ENCODE measurements at regions of chr12 and their contacts with region 1.

Region 1: DNA sequence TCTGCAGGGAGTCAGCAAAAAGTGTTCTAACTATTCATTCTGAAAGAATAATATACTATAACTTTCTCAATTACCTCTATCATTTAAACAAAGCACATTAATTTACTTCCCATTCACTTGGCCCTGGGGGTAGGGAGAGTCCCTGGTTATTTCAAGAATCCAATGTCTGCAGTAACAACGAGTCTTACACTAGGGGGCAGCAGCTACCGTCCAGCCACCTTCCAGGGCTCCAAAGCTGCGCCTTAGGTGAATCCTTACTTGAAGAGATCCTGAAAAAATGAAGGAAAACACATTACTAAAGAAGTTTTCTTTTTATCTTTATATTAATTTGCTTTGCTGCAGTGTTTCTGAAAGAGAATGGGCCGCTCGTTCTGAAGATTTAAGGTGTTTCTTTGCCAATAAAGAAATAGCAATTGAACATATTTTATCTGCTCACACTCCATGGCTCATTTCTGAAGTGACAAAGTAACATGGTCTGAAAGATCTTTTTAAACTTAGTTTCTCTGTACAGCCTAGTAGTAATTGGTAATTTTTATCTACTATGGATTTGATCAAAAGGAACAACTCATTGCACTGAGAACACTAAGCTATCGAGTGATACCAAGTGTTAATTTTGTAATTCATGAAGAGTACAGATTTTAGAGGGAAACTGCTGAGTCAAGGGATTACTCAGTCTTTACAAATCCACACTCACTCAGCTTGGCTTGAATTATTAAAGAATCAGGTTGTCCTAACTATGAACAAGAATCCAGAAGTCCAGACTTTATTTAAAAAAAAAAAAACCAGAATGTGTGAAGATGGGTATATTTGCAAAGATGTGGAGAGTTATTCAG is 27.6 kb downstream of the BHLHE41 start:
- DNase-seq: peak; percentile 79
- H3K4me3 Mint-ChIP-seq: no peak overlapping the region
- H3K27ac Mint-ChIP-seq: no peak overlapping the region
- H3K4me1 Mint-ChIP-seq: peaks cover 14% of the 10 kb centered on the region
- H3K27me3 Mint-ChIP-seq: no peaks in the 10 kb centered on the region
- CTCF ChIP-seq: peak; percentile 84

Region 2: GRCh38 chr12:25005376-25005775 is 1091.9 kb before region 1 on chr12:
- CTCF ChIA-PET with region 1: no interaction called
- intact Hi-C with region 1: no loop called
- DNase-seq: no peak
- H3K4me3 Mint-ChIP-seq: no peak overlapping the region
- H3K27ac Mint-ChIP-seq: no peak overlapping the region
- H3K4me1 Mint-ChIP-seq: no peaks in the 10 kb centered on the region
- H3K27me3 Mint-ChIP-seq: no peaks in the 10 kb centered on the region
- CTCF ChIP-seq: no peak

Region 3: GRCh38 chr12:25757037-25757665 is 340.1 kb before region 1 on chr12:
- CTCF ChIA-PET with region 1: no interaction called
- intact Hi-C with region 1: no loop called
- DNase-seq: no peak
- H3K4me3 Mint-ChIP-seq: no peak overlapping the region
- H3K27ac Mint-ChIP-seq: no peak overlapping the region
- H3K4me1 Mint-ChIP-seq: peaks cover 11% of the 10 kb centered on the region
- H3K27me3 Mint-ChIP-seq: no peaks in the 10 kb centered on the region
- CTCF ChIP-seq: no peak

Region 4: GRCh38 chr12:26113853-26114719 is 16.8 kb after region 1 on chr12:
- CTCF ChIA-PET with region 1: interaction called, 5 read pairs
- intact Hi-C with region 1: loop called (anchors 2 kb)
- DNase-seq: peak; percentile 91
- H3K4me3 Mint-ChIP-seq: peak overlapping the region; percentile 71
- H3K27ac Mint-ChIP-seq: peak overlapping the region; percentile 79
- H3K4me1 Mint-ChIP-seq: peaks cover 29% of the 10 kb centered on the region
- H3K27me3 Mint-ChIP-seq: no peaks in the 10 kb centered on the region
- CTCF ChIP-seq: peak; percentile 23

Region 5: DNA sequence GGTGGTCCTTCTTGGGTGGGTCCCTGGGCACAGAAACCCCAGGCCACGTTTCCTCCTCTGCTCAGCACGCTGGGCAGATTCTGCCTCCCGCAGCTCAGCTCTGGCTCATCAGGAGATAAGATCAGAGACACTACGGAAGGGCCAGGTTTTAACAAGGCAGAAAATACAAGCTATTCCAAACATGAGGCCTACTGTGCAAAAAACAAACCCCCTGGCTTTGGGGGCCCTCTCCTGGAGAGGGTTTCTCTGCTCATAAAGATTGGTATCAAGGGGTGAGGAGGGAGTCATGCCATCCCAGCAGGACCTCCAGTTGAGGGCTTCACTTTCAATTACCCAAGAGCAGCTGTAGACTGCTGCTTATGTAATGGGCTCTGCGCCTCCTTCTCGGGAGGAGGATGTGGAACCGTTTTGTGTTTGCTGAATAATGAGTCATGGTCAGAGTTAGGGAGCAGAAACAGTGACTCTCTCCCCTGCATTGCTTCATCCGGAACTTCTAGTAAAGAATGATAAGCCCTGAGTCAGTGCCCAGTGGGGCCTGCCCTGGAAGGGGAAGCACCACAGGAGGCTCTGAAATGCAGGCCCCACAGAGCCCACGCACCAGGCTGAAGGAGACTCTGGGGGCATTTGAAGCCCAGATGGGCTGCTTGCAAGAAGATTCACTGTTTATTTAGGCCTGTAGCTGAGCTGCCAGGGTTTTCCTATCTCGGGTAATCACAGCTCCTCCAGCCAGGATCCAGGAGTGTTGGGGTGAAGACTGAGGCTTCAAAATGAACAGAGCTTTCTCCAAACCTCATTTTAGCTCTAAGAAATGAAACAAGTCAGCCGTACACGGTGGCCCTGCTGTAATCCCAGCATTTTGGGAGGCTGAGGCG is 177.4 kb after region 1 on chr12:
- CTCF ChIA-PET with region 1: no interaction called
- intact Hi-C with region 1: loop called (anchors 2 kb)
- DNase-seq: peak; percentile 84
- H3K4me3 Mint-ChIP-seq: peak overlapping the region; percentile 28
- H3K27ac Mint-ChIP-seq: peak overlapping the region; percentile 96
- H3K4me1 Mint-ChIP-seq: peaks cover 51% of the 10 kb centered on the region
- H3K27me3 Mint-ChIP-seq: no peaks in the 10 kb centered on the region
- CTCF ChIP-seq: no peak

Region 6: GRCh38 chr12:26614020-26614616 is 516.9 kb after region 1 on chr12:
- CTCF ChIA-PET with region 1: no interaction called
- intact Hi-C with region 1: loop called (anchors 2 kb)
- DNase-seq: peak; percentile 35
- H3K4me3 Mint-ChIP-seq: no peak overlapping the region
- H3K27ac Mint-ChIP-seq: no peak overlapping the region
- H3K4me1 Mint-ChIP-seq: no peaks in the 10 kb centered on the region
- H3K27me3 Mint-ChIP-seq: no peaks in the 10 kb centered on the region
- CTCF ChIP-seq: peak; percentile 52

Region 7: GRCh38 chr12:26701604-26702215 is 604.4 kb after region 1 on chr12:
- CTCF ChIA-PET with region 1: interaction called, 3 read pairs
- intact Hi-C with region 1: loop called (anchors 10 kb)
- DNase-seq: no peak
- H3K4me3 Mint-ChIP-seq: no peak overlapping the region
- H3K27ac Mint-ChIP-seq: no peak overlapping the region
- H3K4me1 Mint-ChIP-seq: peaks cover 4% of the 10 kb centered on the region
- H3K27me3 Mint-ChIP-seq: no peaks in the 10 kb centered on the region
- CTCF ChIP-seq: no peak

Measured in Calu3 (cell line).